ENCODE measurements at regions of chr1 and their contacts with region 1.

Region 1: DNA sequence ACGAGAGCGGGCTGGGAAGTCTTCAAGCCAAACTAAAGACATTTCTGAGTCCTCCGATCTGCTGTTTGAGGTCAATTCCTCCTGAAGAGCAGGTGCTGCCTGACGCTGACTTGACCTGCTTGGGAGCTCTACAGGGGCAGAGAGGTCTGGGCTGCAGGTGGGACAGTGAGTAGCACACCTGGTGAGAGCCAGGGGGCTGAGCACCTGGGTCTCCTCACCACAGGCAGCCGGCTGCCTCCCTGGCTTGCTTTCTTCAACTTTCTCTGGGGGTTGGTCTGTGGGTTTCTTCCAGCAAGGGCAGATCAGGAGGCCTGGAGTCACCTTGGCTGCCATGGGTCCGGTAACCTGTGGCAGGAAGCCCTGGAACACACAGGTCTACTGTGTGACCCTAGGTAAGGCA is 107.4 kb upstream of the EDN2 start:
- DNase-seq: no peak
- H3K4me3 ChIP-seq: no peak overlapping the region
- H3K27ac ChIP-seq: no peak overlapping the region
- H3K4me1 ChIP-seq: no peaks in the 10 kb centered on the region
- H3K27me3 ChIP-seq: no peaks in the 10 kb centered on the region
- CTCF ChIP-seq: no peak
- POLR2A ChIP-seq: no peak

Region 2: GRCh38 chr1:40699787-40700186 is 892.1 kb before region 1 on chr1:
- intact Hi-C with region 1: no loop called
- DNase-seq: no peak
- H3K4me3 ChIP-seq: no peak overlapping the region
- H3K27ac ChIP-seq: no peak overlapping the region
- H3K4me1 ChIP-seq: peaks cover 0 to 5% of the 10 kb centered on the region in 2 donors
- H3K27me3 ChIP-seq: no peaks in the 10 kb centered on the region
- CTCF ChIP-seq: no peak
- POLR2A ChIP-seq: no peak

Region 3: DNA sequence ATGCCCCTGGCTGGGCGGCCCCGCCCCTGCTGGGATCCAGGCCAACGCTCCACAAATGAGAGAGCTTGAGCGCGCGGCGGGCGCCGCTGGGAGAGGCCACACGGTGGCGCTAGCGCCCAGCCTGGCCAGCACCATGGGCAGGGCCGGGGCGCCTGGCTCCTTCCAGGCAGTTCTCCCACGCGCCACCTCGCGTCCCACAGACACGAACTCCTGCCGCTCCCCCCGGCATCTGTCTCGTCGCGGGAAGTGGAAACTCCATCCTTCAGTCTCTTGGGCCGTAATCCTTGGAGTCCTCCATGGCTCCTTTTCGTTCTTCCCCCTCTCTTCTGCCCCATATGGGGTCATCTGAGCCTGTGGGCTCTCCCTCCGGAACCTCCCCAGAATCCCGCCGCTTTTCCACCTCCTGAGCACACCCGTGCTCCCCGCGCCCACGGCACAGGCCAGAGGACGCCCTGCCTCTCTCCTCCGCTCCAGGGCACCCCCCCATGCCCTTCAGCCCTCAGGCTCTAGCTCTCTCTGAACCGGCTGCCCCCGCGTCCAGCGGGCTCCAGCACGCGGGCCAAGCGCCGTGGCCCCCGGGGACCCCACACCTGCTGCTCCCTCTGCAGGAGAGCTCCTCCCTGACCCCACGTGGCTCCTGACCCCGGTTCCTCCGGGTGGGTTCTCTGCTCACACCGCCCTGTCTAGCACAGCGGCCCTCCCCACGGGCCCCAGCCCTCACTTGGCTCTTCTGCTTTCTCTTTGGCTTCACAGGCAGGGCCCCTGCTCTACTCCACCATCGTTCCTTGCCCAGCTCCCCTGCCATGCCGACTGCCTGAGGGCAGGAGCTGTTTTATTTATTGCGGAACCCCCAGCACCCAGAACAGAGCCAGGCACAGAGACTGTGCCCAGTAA is 75.5 kb before region 1 on chr1:
- intact Hi-C with region 1: no loop called
- DNase-seq: peak; percentile 87 to 91
- H3K4me3 ChIP-seq: peak overlapping the region; percentile 38 to 64 (median 52)
- H3K27ac ChIP-seq: peak overlapping the region; percentile 30 to 77
- H3K4me1 ChIP-seq: peaks cover 3 to 15% of the 10 kb centered on the region in 2 donors
- H3K27me3 ChIP-seq: no peaks in the 10 kb centered on the region
- CTCF ChIP-seq: peak; percentile 67 to 83 (median 81)
- POLR2A ChIP-seq: no peak

Region 4: DNA sequence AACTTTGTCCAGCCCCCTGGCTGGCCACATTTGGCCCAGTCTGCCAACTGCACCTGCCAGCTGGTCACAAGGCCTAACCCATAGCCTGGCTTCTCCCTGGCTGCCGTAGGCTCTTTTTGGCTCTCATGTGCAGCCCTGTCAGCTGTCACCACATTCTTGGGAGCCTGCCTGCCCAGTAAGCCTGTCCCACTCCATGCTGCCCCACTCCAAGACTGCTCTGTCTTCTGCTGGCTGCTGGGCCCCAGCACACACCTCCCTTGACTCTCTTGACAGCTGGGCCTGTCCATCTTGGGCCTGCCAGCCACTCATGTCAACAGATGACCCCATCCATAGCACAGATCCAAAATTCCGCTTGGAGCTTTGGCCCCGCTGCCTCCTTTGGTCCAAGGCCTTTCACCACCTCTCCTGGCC is 33.1 kb before region 1 on chr1:
- intact Hi-C with region 1: no loop called
- DNase-seq: peak in 1 of 2 donors; percentile 37
- H3K4me3 ChIP-seq: no peak overlapping the region
- H3K27ac ChIP-seq: no peak overlapping the region
- H3K4me1 ChIP-seq: no peaks in the 10 kb centered on the region
- H3K27me3 ChIP-seq: no peaks in the 10 kb centered on the region
- CTCF ChIP-seq: no peak
- POLR2A ChIP-seq: no peak

Region 5: DNA sequence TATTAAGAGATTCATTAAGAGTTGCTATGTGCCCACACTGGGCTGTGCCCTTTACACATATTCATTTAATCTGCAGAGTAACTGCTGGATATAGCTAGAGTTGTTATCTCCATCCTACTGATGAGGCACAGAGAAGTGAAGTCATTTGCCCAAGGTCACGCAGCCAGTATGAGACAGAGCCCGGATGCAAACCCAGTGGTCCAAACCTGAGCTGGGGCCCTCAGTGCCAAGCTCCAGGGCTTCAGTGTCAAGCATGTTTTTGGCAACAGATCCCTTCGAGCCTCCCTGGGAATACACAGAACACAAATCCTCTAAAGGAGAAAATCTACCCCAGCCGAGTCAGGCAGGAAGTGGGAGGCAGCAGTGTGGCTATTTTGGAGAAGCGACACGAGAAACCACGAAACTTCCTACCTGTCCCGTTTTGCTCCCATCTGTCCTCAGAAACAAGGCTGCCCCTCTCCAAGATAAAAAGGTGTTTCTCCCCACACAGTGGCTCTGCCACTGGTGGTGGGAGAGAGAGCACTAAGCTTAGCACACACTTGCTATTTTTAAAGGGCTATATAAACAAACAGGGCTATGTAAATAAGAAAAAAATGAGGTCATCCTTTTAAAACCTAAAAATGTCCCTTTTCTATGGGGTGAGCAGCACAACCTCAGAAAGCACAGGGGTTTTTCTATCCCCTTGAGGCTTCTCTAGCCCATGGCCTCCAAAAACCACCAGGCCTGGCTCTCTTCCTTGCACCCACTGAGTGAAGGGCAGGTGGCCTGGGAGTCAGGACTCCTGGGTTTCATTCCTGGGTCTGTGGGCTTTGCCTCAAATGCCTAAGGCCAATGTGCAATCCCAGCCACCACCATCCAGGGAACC is 31.2 kb after region 1 on chr1:
- intact Hi-C with region 1: no loop called
- DNase-seq: peak in 1 of 2 donors; percentile 15
- H3K4me3 ChIP-seq: no peak overlapping the region
- H3K27ac ChIP-seq: no peak overlapping the region
- H3K4me1 ChIP-seq: peaks cover 2 to 16% of the 10 kb centered on the region in 2 donors
- H3K27me3 ChIP-seq: no peaks in the 10 kb centered on the region
- CTCF ChIP-seq: no peak
- POLR2A ChIP-seq: no peak

Region 6: DNA sequence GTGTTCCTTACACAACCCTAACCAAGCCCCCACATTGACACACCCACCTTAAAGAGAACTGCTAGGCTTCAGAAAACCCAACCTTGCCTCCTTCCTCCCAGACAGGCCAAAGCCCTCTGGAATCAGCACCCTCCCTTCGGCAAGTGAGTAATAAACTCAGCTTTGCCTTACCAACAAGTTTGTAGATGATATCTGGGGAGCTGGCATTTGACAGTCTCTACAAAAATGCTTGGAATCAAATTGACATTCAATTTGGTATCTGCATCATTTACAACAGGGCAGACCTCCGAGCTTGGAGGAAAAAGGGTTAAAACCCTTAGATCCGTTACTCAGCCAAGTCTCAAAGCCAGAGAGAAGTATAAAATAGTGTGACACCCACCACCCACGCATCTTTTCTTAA is 41.8 kb after region 1 on chr1:
- intact Hi-C with region 1: loop called (anchors 1 kb)
- DNase-seq: no peak
- H3K4me3 ChIP-seq: no peak overlapping the region
- H3K27ac ChIP-seq: peak overlapping the region in 1 of 2 donors; percentile 37
- H3K4me1 ChIP-seq: no peaks in the 10 kb centered on the region
- H3K27me3 ChIP-seq: no peaks in the 10 kb centered on the region
- CTCF ChIP-seq: no peak
- POLR2A ChIP-seq: no peak

Region 7: DNA sequence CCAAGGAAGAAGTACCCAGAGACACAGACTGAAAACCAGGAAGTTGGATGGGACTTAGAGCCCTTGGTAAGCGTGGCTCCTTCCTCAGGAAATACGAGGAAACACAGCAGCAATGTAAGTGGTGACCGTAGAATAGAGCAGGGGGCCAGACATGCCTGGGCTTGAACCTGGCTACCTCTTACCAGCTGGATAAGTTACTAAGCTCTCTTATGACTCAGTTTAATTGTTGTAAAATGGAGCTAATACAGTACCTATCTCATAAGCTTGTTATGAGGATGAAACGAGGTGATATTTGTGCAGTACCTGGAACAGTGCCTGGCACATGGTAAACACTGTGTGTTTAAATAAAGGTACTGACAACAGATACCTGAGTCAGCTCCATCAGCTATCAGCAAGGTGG is 1561.0 kb after region 1 on chr1:
- intact Hi-C with region 1: loop called (anchors 5 kb)
- DNase-seq: no peak
- H3K4me3 ChIP-seq: no peak overlapping the region
- H3K27ac ChIP-seq: no peak overlapping the region
- H3K4me1 ChIP-seq: no peaks in the 10 kb centered on the region
- H3K27me3 ChIP-seq: no peaks in the 10 kb centered on the region
- CTCF ChIP-seq: no peak
- POLR2A ChIP-seq: no peak

Measured in breast epithelium (tissue), 4 donors.